CD4-positive, alpha-beta memory T cell (primary cell): ENCODE measurements at regions of chr15 and their contacts with region 1.

Region 1: GRCh38 chr15:69749797-69750196 is 297.2 kb downstream of the RPLP1 start:
- DNase-seq: peak in 3 of 5 donors; percentile 21 to 35 (median 26)
- H3K4me3 ChIP-seq: no peak overlapping the region
- H3K4me3 Mint-ChIP-seq: no peak overlapping the region
- H3K27ac ChIP-seq: no peak overlapping the region
- H3K27ac Mint-ChIP-seq: no peak overlapping the region
- H3K4me1 ChIP-seq: peaks cover 24% of the 10 kb centered on the region
- H3K4me1 Mint-ChIP-seq: peaks cover 18 to 47% (median 28%) of the 10 kb centered on the region in 4 donors
- H3K27me3 ChIP-seq: no peaks in the 10 kb centered on the region
- H3K27me3 Mint-ChIP-seq: peaks cover 0 to 5% of the 10 kb centered on the region in 2 donors

Region 2: GRCh38 chr15:68447209-68447608 is 1302.6 kb before region 1 on chr15:
- CTCF ChIA-PET with region 1: no interaction called
- POLR2A ChIA-PET with region 1: no interaction called
- intact Hi-C with region 1: no loop called
- DNase-seq: no peak
- H3K4me3 ChIP-seq: no peak overlapping the region
- H3K4me3 Mint-ChIP-seq: no peak overlapping the region
- H3K27ac ChIP-seq: no peak overlapping the region
- H3K27ac Mint-ChIP-seq: no peak overlapping the region
- H3K4me1 ChIP-seq: no peaks in the 10 kb centered on the region
- H3K4me1 Mint-ChIP-seq: no peaks in the 10 kb centered on the region
- H3K27me3 ChIP-seq: peaks cover 6% of the 10 kb centered on the region
- H3K27me3 Mint-ChIP-seq: peaks cover 30 to 38% of the 10 kb centered on the region in 2 donors

Region 3: GRCh38 chr15:69729161-69729748 is 20.5 kb before region 1 on chr15:
- CTCF ChIA-PET with region 1: interaction called, 13 read pairs
- POLR2A ChIA-PET with region 1: interaction called, 117 read pairs
- intact Hi-C with region 1: no loop called
- DNase-seq: peak; percentile 59 to 68 (median 64)
- H3K4me3 ChIP-seq: no peak overlapping the region
- H3K4me3 Mint-ChIP-seq: peak overlapping the region in 1 of 8 donors; percentile 10
- H3K27ac ChIP-seq: no peak overlapping the region
- H3K27ac Mint-ChIP-seq: peak overlapping the region in 1 of 7 donors; percentile 0
- H3K4me1 ChIP-seq: peaks cover 20% of the 10 kb centered on the region
- H3K4me1 Mint-ChIP-seq: peaks cover 9 to 32% (median 23%) of the 10 kb centered on the region in 4 donors
- H3K27me3 ChIP-seq: no peaks in the 10 kb centered on the region
- H3K27me3 Mint-ChIP-seq: peaks cover 0 to 2% of the 10 kb centered on the region in 2 donors

Region 4: GRCh38 chr15:69735121-69735520 is 14.7 kb before region 1 on chr15:
- CTCF ChIA-PET with region 1: interaction called, 13 read pairs
- POLR2A ChIA-PET with region 1: interaction called, 5 read pairs
- intact Hi-C with region 1: no loop called
- DNase-seq: no peak
- H3K4me3 ChIP-seq: no peak overlapping the region
- H3K4me3 Mint-ChIP-seq: no peak overlapping the region
- H3K27ac ChIP-seq: no peak overlapping the region
- H3K27ac Mint-ChIP-seq: no peak overlapping the region
- H3K4me1 ChIP-seq: no peaks in the 10 kb centered on the region
- H3K4me1 Mint-ChIP-seq: peaks cover 2 to 4% (median 3%) of the 10 kb centered on the region in 4 donors
- H3K27me3 ChIP-seq: no peaks in the 10 kb centered on the region
- H3K27me3 Mint-ChIP-seq: peaks cover 0 to 1% of the 10 kb centered on the region in 2 donors